ENCODE measurements at regions of chr14 and their contacts with region 1.

Region 1: DNA sequence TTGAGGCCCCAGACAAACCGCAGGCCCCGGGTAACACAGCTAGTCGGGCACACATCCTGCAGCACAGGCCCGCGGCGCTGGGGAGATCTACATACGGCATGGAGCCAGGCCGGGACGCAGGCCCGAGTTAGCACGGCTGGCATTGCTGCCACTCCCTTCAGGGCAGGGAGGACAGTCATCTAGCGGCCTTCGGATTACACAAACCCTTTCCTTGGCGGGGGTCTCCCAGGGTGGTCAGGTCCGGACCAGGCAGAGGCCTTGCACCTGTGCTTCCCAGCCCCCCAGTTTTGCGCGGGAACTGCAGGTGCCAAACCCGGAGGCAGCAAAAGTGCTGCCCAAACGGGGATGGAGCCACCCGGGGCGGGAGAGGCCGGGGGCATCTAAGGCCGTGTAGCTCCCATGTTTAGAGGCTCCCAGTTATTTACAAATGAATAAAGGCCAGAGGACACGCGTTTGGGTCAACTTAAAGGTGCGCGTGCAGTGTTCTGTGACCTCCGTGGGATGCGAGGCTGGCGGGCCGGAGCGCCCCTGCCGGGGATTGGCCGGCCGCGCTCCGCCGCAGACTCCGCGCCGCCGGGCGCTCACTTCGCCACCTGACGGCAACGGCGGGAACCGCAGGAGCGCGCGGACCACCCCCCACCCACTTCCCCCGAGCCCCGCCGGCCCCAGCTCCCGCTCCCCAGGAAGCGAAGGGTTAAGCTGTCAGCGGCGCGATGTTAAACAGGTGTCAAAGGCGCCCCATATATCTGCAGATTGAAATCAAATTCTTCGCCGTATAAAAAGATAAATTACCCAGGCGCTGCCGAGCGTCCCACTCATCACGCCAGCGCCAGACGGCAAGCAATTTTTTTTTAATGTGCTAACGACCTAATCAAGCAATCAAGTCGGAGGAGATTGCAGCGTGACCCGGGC is 18.1 kb downstream of the VSX2 start:
- DNase-seq: peak; percentile 67
- ATAC-seq: peak; percentile 92
- H3K4me3 Mint-ChIP-seq: peak overlapping the region; percentile 70
- H3K27ac Mint-ChIP-seq: no peak overlapping the region
- H3K4me1 Mint-ChIP-seq: peaks cover 9% of the 10 kb centered on the region
- H3K27me3 Mint-ChIP-seq: peaks cover 35% of the 10 kb centered on the region

Region 2: GRCh38 chr14:74109369-74109768 is 148.0 kb before region 1 on chr14:
- CTCF ChIA-PET with region 1: interaction called, 15 read pairs
- DNase-seq: no peak
- ATAC-seq: no peak
- H3K4me3 Mint-ChIP-seq: no peak overlapping the region
- H3K27ac Mint-ChIP-seq: no peak overlapping the region
- H3K4me1 Mint-ChIP-seq: peaks cover 8% of the 10 kb centered on the region
- H3K27me3 Mint-ChIP-seq: no peaks in the 10 kb centered on the region

Region 3: DNA sequence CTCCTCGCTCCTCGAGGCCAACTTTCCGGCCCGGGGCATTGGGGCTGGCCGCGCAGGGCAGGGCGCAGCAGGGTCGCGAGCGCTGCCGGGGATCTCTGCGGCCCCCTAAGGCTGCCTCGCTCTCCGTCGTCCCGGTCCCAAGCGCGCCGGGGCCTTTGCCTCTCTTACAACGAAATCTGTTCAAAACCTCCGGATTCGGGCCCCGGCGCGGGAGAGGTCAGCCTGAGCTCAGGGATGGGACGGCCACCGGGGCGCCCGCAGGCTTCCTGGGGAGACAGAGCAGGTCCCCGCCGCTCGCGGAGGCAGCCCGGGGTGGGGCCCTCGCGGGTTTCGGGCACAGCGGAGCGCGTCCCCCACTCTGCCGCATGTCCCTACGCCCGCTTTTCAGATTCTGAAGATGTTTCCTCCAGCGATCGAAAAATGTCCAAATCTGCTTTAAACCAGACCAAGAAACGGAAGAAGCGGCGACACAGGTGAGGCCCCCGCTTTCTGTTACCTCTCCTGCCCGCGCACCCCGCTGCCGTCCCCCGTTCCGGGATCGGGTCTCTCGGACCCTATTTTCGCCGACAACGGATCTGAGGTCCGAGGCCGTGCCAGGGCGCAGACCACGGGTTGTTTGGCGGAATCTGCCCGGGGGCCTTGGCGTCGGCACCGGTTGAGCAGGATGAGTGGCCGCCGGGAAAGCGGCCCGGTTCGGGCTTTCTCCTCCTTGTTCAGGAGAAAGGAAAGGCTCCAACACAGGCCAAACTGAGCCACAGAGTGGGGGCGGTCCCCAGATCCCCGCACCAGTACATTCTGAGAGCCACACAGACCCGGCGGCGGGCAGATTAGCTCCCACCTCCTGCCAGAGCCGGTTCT is 16.3 kb before region 1 on chr14:
- CTCF ChIA-PET with region 1: interaction called, 27 read pairs
- DNase-seq: no peak
- ATAC-seq: peak; percentile 38
- H3K4me3 Mint-ChIP-seq: peak overlapping the region; percentile 17
- H3K27ac Mint-ChIP-seq: no peak overlapping the region
- H3K4me1 Mint-ChIP-seq: peaks cover 15% of the 10 kb centered on the region
- H3K27me3 Mint-ChIP-seq: peaks cover 87% of the 10 kb centered on the region

Region 4: GRCh38 chr14:74267588-74267987 is 10.3 kb after region 1 on chr14:
- CTCF ChIA-PET with region 1: interaction called, 17 read pairs
- DNase-seq: no peak
- ATAC-seq: no peak
- H3K4me3 Mint-ChIP-seq: no peak overlapping the region
- H3K27ac Mint-ChIP-seq: no peak overlapping the region
- H3K4me1 Mint-ChIP-seq: no peaks in the 10 kb centered on the region
- H3K27me3 Mint-ChIP-seq: peaks cover 16% of the 10 kb centered on the region

Region 5: DNA sequence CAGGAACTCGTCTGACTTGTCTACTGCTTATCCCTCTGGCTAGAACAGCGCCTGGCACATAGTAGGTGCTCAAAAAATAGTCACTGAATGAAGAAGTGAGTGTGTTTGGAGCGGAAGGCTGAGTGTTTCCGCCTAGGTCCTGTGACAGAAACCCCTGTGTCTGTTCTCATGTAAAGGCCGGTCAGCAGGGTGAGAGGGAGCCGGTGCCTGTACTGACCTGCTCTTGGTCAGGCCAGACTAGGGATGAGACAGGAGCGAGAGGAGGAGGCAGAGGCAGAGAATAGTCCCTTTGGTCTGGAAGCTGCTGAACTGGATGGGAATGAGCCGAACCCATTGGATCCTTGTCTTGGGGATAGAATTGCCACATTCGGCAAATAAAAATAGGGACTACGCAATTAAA is 111.5 kb after region 1 on chr14:
- CTCF ChIA-PET with region 1: no interaction called
- DNase-seq: no peak
- ATAC-seq: no peak
- H3K4me3 Mint-ChIP-seq: no peak overlapping the region
- H3K27ac Mint-ChIP-seq: no peak overlapping the region
- H3K4me1 Mint-ChIP-seq: no peaks in the 10 kb centered on the region
- H3K27me3 Mint-ChIP-seq: peaks cover 12% of the 10 kb centered on the region

Region 6: GRCh38 chr14:74444866-74445265 is 187.5 kb after region 1 on chr14:
- CTCF ChIA-PET with region 1: no interaction called
- DNase-seq: peak; percentile 26
- ATAC-seq: no peak
- H3K4me3 Mint-ChIP-seq: no peak overlapping the region
- H3K27ac Mint-ChIP-seq: no peak overlapping the region
- H3K4me1 Mint-ChIP-seq: no peaks in the 10 kb centered on the region
- H3K27me3 Mint-ChIP-seq: peaks cover 41% of the 10 kb centered on the region

Measured in activated CD8-positive, alpha-beta memory T cell treated with anti-CD3 and anti-CD28 coated beads, Interleukin-2, amount 10 ng/mL, durations not matched to agents 7 days and 5 days (primary cell).